T-cell (primary cell): ENCODE measurements at regions of chr11 and their contacts with region 1.

Region 1: GRCh38 chr11:58726737-58727414 is 4.9 kb downstream of the GLYAT start:
- DNase-seq: peak in 14 of 35 experiments; percentile 2 to 58 (median 14)
- ATAC-seq: peak; percentile 90 to 95 (median 92)
- H3K4me3 ChIP-seq: no peak overlapping the region
- H3K4me3 Mint-ChIP-seq: peak overlapping the region in 2 of 3 donors; percentile 8 to 70
- H3K27ac ChIP-seq: peak overlapping the region; percentile 69
- H3K27ac Mint-ChIP-seq: peak overlapping the region; percentile 93 to 97
- H3K4me1 ChIP-seq: peaks cover 22 to 25% of the 10 kb centered on the region in 2 experiments
- H3K4me1 Mint-ChIP-seq: peaks cover 46 to 50% (median 47%) of the 10 kb centered on the region in 3 donors
- H3K27me3 ChIP-seq: no peaks in the 10 kb centered on the region
- H3K27me3 Mint-ChIP-seq: no peaks in the 10 kb centered on the region

Region 2: DNA sequence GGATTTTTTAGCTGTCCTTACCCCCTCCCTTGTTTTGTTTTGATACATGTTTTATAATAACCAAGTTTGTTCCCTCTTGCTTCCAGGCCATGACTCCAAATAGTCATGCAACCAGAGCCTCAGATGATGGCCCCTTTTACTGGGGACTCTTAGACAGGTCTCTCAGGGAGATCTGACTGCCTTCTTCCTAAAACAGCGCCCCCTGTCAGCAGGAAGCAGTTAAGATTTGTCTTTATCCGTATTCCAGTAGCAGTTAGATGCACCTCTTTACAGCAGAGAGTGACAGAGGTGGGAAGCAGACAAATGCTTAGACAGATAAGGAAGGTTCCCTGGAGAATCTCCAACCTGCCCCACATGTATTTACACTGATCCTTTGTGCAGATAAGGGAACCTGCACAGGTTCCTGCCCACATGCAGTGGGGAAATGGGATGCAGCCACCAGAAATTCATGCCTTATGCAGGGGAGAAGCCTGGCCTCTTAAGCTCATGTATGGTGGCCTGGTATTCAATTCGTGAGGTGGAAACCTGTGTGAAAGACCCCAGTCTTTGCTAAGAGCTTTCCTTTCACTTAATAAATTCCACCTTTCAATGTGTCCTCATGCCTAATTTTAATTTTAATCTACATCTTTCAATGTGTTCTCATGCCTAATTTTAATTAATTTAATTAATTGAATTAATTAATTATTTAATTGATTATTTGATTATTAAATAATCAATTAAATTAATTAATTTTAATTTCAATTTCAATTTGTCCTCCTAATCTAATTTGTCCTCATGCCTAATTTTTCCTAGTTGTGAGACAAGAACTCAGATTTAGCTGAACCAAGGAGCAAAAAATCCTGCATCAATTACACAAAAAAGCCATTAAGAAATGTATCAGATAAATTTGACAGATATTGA is 16.4 kb after region 1 on chr11:
- CTCF ChIA-PET with region 1: interaction called in 1 of 2 experiments, 10 read pairs
- POLR2A ChIA-PET with region 1: no interaction called
- DNase-seq: no peak
- ATAC-seq: no peak
- H3K4me3 ChIP-seq: no peak overlapping the region
- H3K4me3 Mint-ChIP-seq: no peak overlapping the region
- H3K27ac ChIP-seq: no peak overlapping the region
- H3K27ac Mint-ChIP-seq: no peak overlapping the region
- H3K4me1 ChIP-seq: no peaks in the 10 kb centered on the region
- H3K4me1 Mint-ChIP-seq: peaks cover 0 to 15% (median 10%) of the 10 kb centered on the region in 3 donors
- H3K27me3 ChIP-seq: peaks cover 0 to 4% of the 10 kb centered on the region in 2 experiments
- H3K27me3 Mint-ChIP-seq: peaks cover 6 to 8% of the 10 kb centered on the region in 2 donors